Pancreas (tissue), 10 donors: ENCODE measurements at regions of chr15 and their contacts with region 1.

Region 1: GRCh38 chr15:64731012-64731806 is 44.2 kb downstream of the RBPMS2 start:
- DNase-seq: peak; percentile 81 to 95 (median 92)
- ATAC-seq: peak; percentile 92 to 96 (median 96)
- H3K4me3 ChIP-seq: no peak overlapping the region
- H3K27ac ChIP-seq: no peak overlapping the region
- H3K4me1 ChIP-seq: no peaks in the 10 kb centered on the region
- H3K27me3 ChIP-seq: no peaks in the 10 kb centered on the region
- CTCF ChIP-seq: peak; percentile 70 to 91 (median 83)

Region 2: DNA sequence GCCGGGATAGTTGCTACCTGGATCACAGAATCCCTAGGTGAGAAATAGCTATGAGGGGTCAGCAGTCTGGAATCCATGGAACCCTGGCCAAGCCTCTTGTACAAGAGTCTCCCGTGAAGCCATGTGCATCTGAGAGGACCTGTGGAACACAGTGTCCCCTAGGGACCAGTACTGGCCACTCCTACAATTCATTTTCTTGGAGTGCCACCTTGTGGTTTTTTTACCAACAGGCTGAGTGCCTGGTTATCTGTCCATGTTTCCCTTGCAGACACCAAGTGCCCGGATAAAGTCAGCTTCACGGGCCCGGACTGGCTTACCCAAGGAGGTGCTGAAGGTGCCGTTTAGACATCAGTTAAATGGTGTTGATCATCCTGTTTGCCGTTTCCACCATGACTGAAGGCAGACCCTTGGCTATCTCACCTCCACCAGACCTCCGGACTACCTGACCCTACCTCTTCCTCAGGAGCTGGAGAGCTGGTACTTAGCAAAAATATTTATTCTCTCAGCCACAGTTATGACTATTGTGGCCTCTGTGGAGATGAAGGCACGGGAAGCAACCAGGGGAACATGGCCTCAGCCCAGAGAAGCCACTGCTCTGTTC is 49.7 kb before region 1 on chr15:
- intact Hi-C with region 1: loop called in 2 of 3 experiments (anchors 2 to 5 kb)
- DNase-seq: peak in 2 of 6 donors; percentile 50 to 65
- ATAC-seq: peak; percentile 86 to 92 (median 90)
- H3K4me3 ChIP-seq: no peak overlapping the region
- H3K27ac ChIP-seq: no peak overlapping the region
- H3K4me1 ChIP-seq: no peaks in the 10 kb centered on the region
- H3K27me3 ChIP-seq: no peaks in the 10 kb centered on the region
- CTCF ChIP-seq: peak; percentile 32 to 65 (median 56)

Region 3: GRCh38 chr15:64809649-64810496 is 78.7 kb after region 1 on chr15:
- intact Hi-C with region 1: loop called (anchors 5 kb)
- DNase-seq: peak; percentile 62 to 90 (median 78)
- ATAC-seq: peak; percentile 71 to 97 (median 90)
- H3K4me3 ChIP-seq: no peak overlapping the region
- H3K27ac ChIP-seq: no peak overlapping the region
- H3K4me1 ChIP-seq: no peaks in the 10 kb centered on the region
- H3K27me3 ChIP-seq: no peaks in the 10 kb centered on the region
- CTCF ChIP-seq: peak; percentile 75 to 88 (median 83)

Region 4: DNA sequence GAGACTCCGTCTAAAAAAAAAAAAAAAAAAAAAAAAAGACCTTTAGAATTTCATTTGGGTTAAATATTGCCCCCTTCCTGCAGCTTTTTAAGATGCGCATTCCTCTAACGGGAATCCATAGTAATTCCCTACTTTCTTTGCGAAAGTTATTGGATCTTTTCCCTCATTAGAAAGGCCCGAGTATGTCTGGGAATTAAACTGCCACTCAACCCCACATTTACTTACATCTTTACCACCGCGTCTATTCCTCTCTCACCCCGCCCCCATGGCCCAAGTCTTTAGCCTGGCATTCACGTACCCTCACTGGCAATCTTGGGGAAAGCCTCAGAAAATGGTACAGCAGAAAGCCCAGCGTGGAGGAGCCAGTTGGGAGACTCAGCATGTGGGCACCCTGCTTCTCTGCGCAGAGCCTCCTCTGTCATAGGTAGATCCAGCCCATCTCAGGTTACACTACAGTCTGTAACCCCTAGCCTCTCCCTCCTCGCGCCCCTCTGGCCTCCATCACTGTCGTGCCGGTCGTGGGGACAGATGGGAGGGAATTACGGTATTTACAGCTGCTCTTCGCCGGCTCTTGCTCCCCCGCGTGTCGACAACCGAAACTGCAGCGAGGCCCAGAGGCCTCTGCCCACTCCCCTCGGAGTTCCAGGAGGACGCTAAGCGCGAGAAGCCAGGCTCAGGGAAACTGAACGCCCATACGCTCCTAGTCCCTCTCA is 174.1 kb after region 1 on chr15:
- intact Hi-C with region 1: loop called in 2 of 3 experiments (anchors 5 to 10 kb)
- DNase-seq: peak; percentile 58 to 87 (median 74)
- ATAC-seq: peak; percentile 82 to 98 (median 95)
- H3K4me3 ChIP-seq: peak overlapping the region in 1 of 4 donors; percentile 33
- H3K27ac ChIP-seq: no peak overlapping the region
- H3K4me1 ChIP-seq: no peaks in the 10 kb centered on the region
- H3K27me3 ChIP-seq: peaks cover 0 to 3% (median 0%) of the 10 kb centered on the region in 4 donors
- CTCF ChIP-seq: peak; percentile 67 to 92 (median 74)

Region 5: GRCh38 chr15:64911311-64912191 is 180.3 kb after region 1 on chr15 and contains the start of gene ANKDD1A:
- intact Hi-C with region 1: loop called in 2 of 3 experiments (anchors 5 to 10 kb)
- DNase-seq: peak; percentile 55 to 83 (median 64)
- ATAC-seq: peak; percentile 93 to 97 (median 95)
- H3K4me3 ChIP-seq: peak within 1 kb of the TSS; percentile 40 to 70 (median 51)
- H3K27ac ChIP-seq: no peak within 1 kb of the TSS
- H3K4me1 ChIP-seq: no peaks in the 10 kb centered on the region
- H3K27me3 ChIP-seq: peaks cover 0 to 3% (median 0%) of the 10 kb centered on the region in 4 donors
- CTCF ChIP-seq: no peak
- total RNA-seq, gene ANKDD1A: 2.0 to 4.9 (median 3.8) TPM